Heart left ventricle (tissue), 16 donors: ENCODE measurements at regions of chr4 and their contacts with region 1.

Region 1: DNA sequence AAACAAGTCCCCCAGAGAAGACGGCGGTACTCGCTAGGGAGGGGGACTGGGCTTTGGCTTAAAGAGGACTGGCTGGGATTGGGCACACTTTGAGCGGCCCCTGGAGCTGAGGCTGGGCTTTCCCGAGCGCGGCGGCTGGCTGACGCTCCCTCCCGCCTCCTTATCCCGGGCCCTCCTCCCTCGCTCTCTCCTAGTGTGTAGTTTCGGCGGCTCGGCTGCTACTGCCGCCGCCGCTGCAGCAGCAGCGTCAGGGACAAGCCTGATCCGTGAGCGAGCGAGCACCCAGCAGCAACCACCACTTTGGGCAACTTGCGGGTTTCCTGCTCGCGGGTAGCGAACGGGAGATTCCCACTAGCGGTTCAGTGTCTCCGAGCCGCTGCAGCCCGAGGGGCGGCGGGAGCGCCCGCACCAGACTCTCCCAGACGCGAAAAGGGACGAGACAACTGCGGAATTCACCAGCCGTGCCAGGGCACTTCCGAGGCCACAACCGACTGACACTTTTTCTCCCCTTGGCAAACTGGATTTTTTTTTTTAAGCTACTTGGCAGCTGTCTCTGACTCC is 629 bp upstream of the PCDH7 start:
- DNase-seq: peak; percentile 53 to 70 (median 65)
- ATAC-seq: peak; percentile 47 to 67 (median 64)
- H3K4me3 ChIP-seq: peak overlapping the region; percentile 19 to 78 (median 65)
- H3K27ac ChIP-seq: peak overlapping the region; percentile 33 to 87 (median 72)
- H3K4me1 ChIP-seq: peaks cover 0 to 49% (median 13%) of the 10 kb centered on the region in 12 donors
- H3K27me3 ChIP-seq: peaks cover 0 to 71% (median 11%) of the 10 kb centered on the region in 9 donors
- CTCF ChIP-seq: no peak
- POLR2A ChIP-seq: no peak

Region 2: DNA sequence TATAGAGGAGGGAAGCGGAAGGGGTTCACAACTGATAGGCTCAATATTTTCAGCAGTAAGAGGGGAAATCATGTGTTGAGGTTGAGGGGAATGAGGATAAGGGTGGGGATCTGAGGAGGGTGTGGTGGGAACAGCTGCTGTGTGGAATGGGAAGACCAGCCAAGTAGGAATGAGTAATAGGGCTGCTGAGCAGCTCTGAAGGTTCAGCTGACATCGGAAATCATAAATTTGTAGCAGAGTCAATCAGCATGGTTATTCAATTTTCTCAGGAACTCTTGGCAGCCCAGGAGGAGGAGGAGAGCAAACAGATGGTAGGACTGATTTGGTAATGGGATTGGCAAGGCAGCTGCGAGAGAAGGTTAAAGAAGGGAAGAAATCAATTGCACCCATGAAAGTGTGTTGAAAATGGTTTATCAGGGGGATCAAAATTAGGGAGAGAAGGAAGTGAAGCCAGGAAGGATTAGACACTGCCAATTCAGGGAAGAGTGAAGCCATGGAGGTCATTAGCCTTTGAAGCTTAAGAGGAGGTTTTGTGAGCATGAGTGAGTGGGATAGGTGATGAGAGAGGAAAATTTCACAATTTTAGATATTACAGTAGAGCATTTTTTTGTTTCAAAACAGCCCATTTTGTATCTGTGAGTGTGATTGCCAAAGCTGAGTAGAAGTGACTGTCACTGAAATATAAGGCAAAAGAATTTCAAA is 83.2 kb after region 1 on chr4:
- intact Hi-C with region 1: no loop called
- DNase-seq: peak in 1 of 5 donors; percentile 23
- ATAC-seq: peak in 3 of 4 donors; percentile 89 to 93 (median 90)
- H3K4me3 ChIP-seq: no peak overlapping the region
- H3K27ac ChIP-seq: peak overlapping the region in 1 of 12 donors; percentile 31
- H3K4me1 ChIP-seq: peaks cover 0 to 3% (median 0%) of the 10 kb centered on the region in 12 donors
- H3K27me3 ChIP-seq: no peaks in the 10 kb centered on the region
- CTCF ChIP-seq: no peak
- POLR2A ChIP-seq: no peak

Region 3: DNA sequence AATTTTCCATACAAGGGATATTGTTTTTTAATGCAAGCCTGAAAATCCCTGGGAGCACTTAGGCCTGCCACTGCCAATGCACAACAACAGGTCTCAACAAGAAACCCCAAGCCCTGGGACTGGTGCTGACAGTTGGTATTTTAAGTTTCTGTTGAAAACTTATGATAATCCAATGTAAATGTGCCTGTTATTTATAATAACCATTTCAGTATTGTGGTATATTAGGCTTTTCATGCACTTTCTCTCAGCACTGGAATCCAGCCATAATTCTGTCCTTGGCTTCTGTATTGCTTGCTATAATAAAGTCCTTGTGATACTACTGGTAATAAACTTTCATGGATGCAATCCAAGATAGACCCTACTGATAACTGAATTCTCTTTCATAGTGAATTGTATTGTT is 219.5 kb after region 1 on chr4:
- intact Hi-C with region 1: loop called in 2 of 10 experiments (anchors 10 kb)
- DNase-seq: no peak
- ATAC-seq: peak in 2 of 4 donors; percentile 30 to 38
- H3K4me3 ChIP-seq: no peak overlapping the region
- H3K27ac ChIP-seq: peak overlapping the region in 1 of 12 donors; percentile 11
- H3K4me1 ChIP-seq: peaks cover 0 to 13% (median 0%) of the 10 kb centered on the region in 12 donors
- H3K27me3 ChIP-seq: no peaks in the 10 kb centered on the region
- CTCF ChIP-seq: no peak
- POLR2A ChIP-seq: no peak

Region 4: GRCh38 chr4:30948653-30949052 is 229.1 kb after region 1 on chr4:
- intact Hi-C with region 1: loop called in 2 of 10 experiments (anchors 5 to 10 kb)
- DNase-seq: no peak
- ATAC-seq: peak in 3 of 4 donors; percentile 36 to 82 (median 70)
- H3K4me3 ChIP-seq: no peak overlapping the region
- H3K27ac ChIP-seq: no peak overlapping the region
- H3K4me1 ChIP-seq: peaks cover 0 to 5% (median 0%) of the 10 kb centered on the region in 12 donors
- H3K27me3 ChIP-seq: no peaks in the 10 kb centered on the region
- CTCF ChIP-seq: no peak
- POLR2A ChIP-seq: no peak

Region 5: DNA sequence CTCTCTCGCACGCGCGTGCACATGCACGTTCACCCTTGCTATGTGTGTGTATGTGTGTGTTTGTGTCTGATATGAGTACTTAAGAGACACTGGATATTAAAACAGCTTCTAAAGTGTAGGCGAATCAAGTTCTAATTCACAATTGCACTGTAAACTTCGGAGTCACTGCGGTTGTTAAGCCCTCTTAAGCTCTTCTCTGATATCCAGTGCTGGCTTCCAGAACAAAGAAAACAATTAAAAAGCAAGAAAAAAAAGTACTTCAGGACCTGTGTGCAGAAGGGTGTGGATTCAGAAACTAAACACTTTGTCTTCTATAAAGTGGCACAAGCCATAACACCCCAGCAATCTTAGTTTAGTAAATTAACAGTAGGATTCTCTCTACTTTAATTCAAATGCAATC is 300.8 kb after region 1 on chr4:
- intact Hi-C with region 1: loop called in 2 of 10 experiments (anchors 5 to 10 kb)
- DNase-seq: no peak
- ATAC-seq: peak in 1 of 4 donors; percentile 18
- H3K4me3 ChIP-seq: no peak overlapping the region
- H3K27ac ChIP-seq: no peak overlapping the region
- H3K4me1 ChIP-seq: peaks cover 0 to 12% (median 0%) of the 10 kb centered on the region in 12 donors
- H3K27me3 ChIP-seq: no peaks in the 10 kb centered on the region
- CTCF ChIP-seq: no peak
- POLR2A ChIP-seq: no peak

Region 6: GRCh38 chr4:31045724-31046318 is 326.3 kb after region 1 on chr4:
- intact Hi-C with region 1: loop called in 1 of 10 experiments (anchors 5 kb)
- DNase-seq: no peak
- ATAC-seq: peak in 3 of 4 donors; percentile 45 to 50 (median 49)
- H3K4me3 ChIP-seq: no peak overlapping the region
- H3K27ac ChIP-seq: no peak overlapping the region
- H3K4me1 ChIP-seq: peaks cover 0 to 16% (median 0%) of the 10 kb centered on the region in 12 donors
- H3K27me3 ChIP-seq: no peaks in the 10 kb centered on the region
- CTCF ChIP-seq: peak in 9 of 12 donors; percentile 33 to 52 (median 43)
- POLR2A ChIP-seq: no peak